Activated naive CD8-positive, alpha-beta T cell treated with anti-CD3 and anti-CD28 coated beads, Interleukin-2, amount 10 ng/mL, durations not matched to agents 7 days and 5 days (primary cell): ENCODE measurements at regions of chr17 and their contacts with region 1.

Region 1: GRCh38 chr17:8393420-8394241 is 4.0 kb downstream of the RNF222 start:
- DNase-seq: no peak
- ATAC-seq: peak; percentile 98
- H3K4me3 Mint-ChIP-seq: peak overlapping the region; percentile 73
- H3K27ac Mint-ChIP-seq: peak overlapping the region; percentile 99
- H3K4me1 Mint-ChIP-seq: peaks cover 16% of the 10 kb centered on the region
- H3K27me3 Mint-ChIP-seq: peaks cover 25% of the 10 kb centered on the region

Region 2: GRCh38 chr17:8314797-8315763 is 78.6 kb before region 1 on chr17:
- POLR2A ChIA-PET with region 1: no interaction called
- DNase-seq: no peak
- ATAC-seq: no peak
- H3K4me3 Mint-ChIP-seq: no peak overlapping the region
- H3K27ac Mint-ChIP-seq: no peak overlapping the region
- H3K4me1 Mint-ChIP-seq: no peaks in the 10 kb centered on the region
- H3K27me3 Mint-ChIP-seq: peaks cover 5% of the 10 kb centered on the region

Region 3: DNA sequence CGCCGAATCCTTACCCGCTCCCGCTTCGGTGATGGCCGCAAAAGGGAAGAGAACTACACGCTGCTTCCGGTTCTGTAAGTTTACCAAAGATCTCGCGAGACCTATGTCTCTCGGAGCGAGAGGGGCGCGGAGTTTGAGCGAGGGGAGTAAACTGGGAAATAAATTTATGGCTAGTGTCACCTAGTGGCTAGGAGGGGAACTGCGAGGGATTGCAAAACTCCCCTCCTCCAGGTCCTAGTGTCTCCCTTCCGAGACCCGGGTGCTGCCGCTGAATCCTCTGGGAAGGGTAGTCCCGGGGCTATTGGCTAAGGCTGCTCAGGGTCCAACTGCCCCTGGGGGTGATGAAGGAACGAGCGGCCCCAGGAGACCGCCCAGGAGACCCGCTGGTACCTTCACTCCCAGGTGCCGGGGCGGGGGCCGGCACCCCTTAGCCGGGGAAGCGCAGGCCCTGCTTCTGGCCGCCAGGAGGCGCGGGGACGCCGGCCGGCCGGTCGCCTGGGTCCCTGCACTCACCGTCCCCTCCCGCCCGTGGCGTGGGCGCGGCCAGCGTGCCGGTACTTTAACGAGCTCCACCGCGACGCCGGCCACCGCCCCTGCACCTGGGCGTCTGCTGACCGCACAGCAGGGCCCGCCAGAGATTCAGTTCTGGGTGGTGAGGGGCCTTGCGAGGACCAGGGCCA is 10.3 kb before region 1 on chr17 and contains the start of gene RPL26:
- POLR2A ChIA-PET with region 1: interaction called, 11 read pairs
- DNase-seq: peak; percentile 96
- ATAC-seq: peak; percentile 96
- H3K4me3 Mint-ChIP-seq: peak within 1 kb of the TSS; percentile 92
- H3K27ac Mint-ChIP-seq: peak within 1 kb of the TSS; percentile 88
- H3K4me1 Mint-ChIP-seq: peaks cover 43% of the 10 kb centered on the region
- H3K27me3 Mint-ChIP-seq: no peaks in the 10 kb centered on the region
- total RNA-seq, gene RPL26: 1,984 to 2,045 TPM

Region 4: GRCh38 chr17:8409966-8410864 is 16.6 kb after region 1 on chr17:
- POLR2A ChIA-PET with region 1: no interaction called
- DNase-seq: peak; percentile 80
- ATAC-seq: peak; percentile 57
- H3K4me3 Mint-ChIP-seq: no peak overlapping the region
- H3K27ac Mint-ChIP-seq: no peak overlapping the region
- H3K4me1 Mint-ChIP-seq: peaks cover 38% of the 10 kb centered on the region
- H3K27me3 Mint-ChIP-seq: peaks cover 29% of the 10 kb centered on the region

Region 5: GRCh38 chr17:8435245-8436168 is 41.9 kb after region 1 on chr17 and contains the start of gene NDEL1:
- POLR2A ChIA-PET with region 1: no interaction called
- DNase-seq: peak; percentile 99
- ATAC-seq: peak; percentile 98
- H3K4me3 Mint-ChIP-seq: peak within 1 kb of the TSS; percentile 94
- H3K27ac Mint-ChIP-seq: peak within 1 kb of the TSS; percentile 96
- H3K4me1 Mint-ChIP-seq: peaks cover 23% of the 10 kb centered on the region
- H3K27me3 Mint-ChIP-seq: no peaks in the 10 kb centered on the region
- total RNA-seq, gene NDEL1: 68.4 to 79.0 TPM